Endothelial cell of umbilical vein (primary cell): ENCODE measurements at regions of chr14 and their contacts with region 1.

Region 1: GRCh38 chr14:23327947-23328744 is 6.9 kb downstream of the PABPN1 start:
- DNase-seq: peak; percentile 70
- H3K4me3 ChIP-seq: no peak overlapping the region
- H3K27ac ChIP-seq: no peak overlapping the region
- H3K4me1 ChIP-seq: peaks cover 4% of the 10 kb centered on the region
- H3K27me3 ChIP-seq: no peaks in the 10 kb centered on the region
- CTCF ChIP-seq: peak; percentile 74 to 81
- POLR2A ChIP-seq: peak; percentile 19

Region 2: DNA sequence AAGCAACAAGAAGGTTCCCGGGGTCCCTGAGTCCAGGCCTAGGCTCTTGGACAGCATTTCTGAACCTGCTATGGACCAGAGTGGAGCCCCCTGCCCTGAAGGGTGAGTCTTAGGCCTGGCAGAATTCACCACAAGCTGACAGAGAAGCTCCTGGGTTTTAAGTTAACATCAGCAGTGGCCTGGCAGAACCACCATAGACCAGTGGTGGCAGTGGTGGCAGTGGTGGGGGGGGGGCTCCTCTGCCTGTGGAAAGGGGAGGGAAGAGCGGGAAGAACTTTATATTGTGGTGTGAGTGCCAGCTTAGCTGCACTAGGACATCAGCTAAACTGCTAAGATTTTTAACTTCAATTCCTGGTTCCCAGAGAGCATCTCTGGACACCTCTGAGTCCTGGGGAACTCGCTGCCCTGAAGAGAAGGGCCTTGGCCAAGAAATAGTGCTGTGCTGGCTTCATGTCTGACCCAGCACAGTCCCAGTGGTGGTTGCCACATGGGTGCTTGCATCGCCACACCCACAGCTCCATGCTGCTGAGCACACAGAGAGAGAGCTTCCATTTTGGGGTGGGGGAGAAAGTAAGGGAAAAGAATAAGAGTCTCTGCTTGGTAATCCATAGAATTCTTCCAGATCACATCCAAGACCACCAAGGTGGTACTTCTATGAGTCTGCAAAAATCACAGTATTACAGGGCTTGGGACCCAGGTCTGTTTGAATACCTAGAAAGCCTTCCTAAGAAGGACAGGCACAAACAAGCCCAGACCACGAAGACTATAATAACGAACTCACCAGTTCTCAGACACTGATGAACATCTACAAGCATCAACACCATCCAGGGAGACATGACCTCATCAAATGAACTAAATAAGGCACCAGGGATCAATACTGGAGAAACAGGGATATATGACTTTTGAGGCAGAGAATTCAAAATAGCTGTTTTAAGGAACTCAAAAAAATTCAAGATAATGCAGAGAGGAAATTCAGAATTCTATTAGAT is 110.8 kb before region 1 on chr14:
- CTCF ChIA-PET with region 1: no interaction called
- POLR2A ChIA-PET with region 1: no interaction called
- dilution Hi-C with region 1: no loop called
- intact Hi-C with region 1: no loop called
- DNase-seq: no peak
- H3K4me3 ChIP-seq: no peak overlapping the region
- H3K27ac ChIP-seq: no peak overlapping the region
- H3K4me1 ChIP-seq: no peaks in the 10 kb centered on the region
- H3K27me3 ChIP-seq: peaks cover 0 to 3% of the 10 kb centered on the region in 2 experiments
- CTCF ChIP-seq: no peak
- POLR2A ChIP-seq: no peak

Region 3: GRCh38 chr14:23379366-23380196 is 51.4 kb after region 1 on chr14:
- CTCF ChIA-PET with region 1: interaction called, 48 read pairs
- POLR2A ChIA-PET with region 1: no interaction called
- dilution Hi-C with region 1: no loop called
- intact Hi-C with region 1: loop called (anchors 1 kb)
- DNase-seq: peak; percentile 34
- H3K4me3 ChIP-seq: no peak overlapping the region
- H3K27ac ChIP-seq: no peak overlapping the region
- H3K4me1 ChIP-seq: no peaks in the 10 kb centered on the region
- H3K27me3 ChIP-seq: no peaks in the 10 kb centered on the region
- CTCF ChIP-seq: peak; percentile 80 to 92
- POLR2A ChIP-seq: no peak

Region 4: DNA sequence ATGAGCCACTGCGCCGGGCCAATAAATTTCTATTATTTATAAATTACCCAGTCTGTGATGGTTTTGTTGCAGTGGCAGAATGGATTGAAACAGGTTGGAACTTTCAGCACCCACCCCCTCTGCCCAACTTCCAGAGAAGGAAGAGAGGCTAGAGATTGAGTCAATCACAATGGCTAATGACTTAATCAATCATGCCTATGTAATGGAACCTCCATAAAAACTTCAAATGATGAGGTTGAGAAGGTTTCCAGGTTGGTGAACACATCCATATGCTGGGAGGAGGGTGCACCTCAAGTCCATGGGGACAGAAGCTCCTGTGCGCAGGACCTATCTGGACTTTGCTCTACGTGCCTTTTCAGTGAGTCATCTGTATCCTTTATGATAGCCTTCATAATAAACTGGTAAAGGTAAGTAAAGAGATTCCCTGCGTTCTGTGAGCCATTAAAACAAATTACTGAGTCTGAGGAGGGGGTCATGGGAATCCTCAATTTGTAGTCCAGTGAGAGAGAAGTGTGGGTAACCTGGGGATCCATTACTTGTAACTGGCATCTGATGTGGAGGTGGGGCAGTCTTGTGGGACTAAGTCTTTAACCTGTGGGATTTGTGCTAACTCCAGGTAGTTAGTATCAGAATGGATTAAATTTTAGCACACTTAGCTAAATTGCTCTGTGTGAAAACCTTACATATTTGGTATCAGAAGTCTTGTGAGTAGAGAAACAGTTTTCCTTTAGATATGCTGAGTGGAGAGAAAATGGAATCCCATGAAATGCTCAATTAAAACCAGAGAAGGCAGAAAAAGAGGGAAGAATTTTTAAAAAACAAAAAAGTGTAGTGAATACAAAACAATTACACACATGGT is 129.7 kb after region 1 on chr14:
- CTCF ChIA-PET with region 1: interaction called, 5 read pairs
- POLR2A ChIA-PET with region 1: no interaction called
- dilution Hi-C with region 1: no loop called
- intact Hi-C with region 1: loop called (anchors 1 kb)
- DNase-seq: no peak
- H3K4me3 ChIP-seq: no peak overlapping the region
- H3K27ac ChIP-seq: no peak overlapping the region
- H3K4me1 ChIP-seq: no peaks in the 10 kb centered on the region
- H3K27me3 ChIP-seq: peaks cover 8 to 12% of the 10 kb centered on the region in 2 experiments
- CTCF ChIP-seq: no peak
- POLR2A ChIP-seq: no peak

Region 5: DNA sequence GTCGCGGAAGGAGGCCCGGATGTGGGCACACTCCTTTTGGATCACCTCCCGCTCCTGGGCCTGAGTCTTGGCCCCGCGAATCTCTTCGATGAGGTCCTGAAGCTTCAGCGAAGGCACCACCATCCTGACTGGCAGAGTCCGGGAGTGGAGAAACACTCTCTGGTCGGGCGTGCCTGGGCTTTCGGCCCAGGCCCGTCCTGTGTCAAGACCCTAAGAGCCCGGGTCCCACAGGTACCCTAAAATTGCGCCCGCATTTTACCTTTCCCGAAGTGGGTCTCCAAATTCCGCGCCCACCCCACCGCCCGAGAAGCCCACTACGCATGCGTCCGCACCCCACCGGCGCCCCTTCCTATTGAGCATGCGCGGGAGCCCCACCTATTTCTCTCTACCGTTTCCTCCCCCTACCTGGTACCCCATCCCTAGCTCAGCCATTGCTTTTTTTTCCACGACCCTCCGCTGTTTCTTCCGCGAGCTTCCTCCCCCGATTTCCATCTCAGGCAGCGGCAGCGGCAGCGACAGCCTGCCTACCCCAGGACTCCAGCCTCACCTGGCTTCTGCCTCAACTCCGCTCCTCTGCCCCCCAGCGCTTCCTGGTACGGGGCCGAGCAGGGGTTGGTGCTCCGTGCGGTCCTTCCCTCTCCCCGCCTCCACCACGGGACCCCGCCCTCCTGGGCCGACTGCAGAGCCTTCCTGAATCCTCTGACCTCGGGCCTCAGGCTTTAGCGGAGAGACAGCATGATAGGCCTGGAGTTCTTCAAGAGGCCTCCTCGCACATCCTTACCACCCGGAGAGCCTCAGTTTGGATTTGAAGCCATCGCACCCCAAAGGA is 239.3 kb after region 1 on chr14 and contains the start of gene AP1G2:
- CTCF ChIA-PET with region 1: interaction called, 3 read pairs
- POLR2A ChIA-PET with region 1: no interaction called
- dilution Hi-C with region 1: no loop called
- intact Hi-C with region 1: loop called (anchors 1 kb)
- DNase-seq: peak; percentile 49
- H3K4me3 ChIP-seq: peak within 1 kb of the TSS; percentile 49 to 65 (median 60)
- H3K27ac ChIP-seq: no peak within 1 kb of the TSS
- H3K4me1 ChIP-seq: peaks cover 4% of the 10 kb centered on the region
- H3K27me3 ChIP-seq: peaks cover 2 to 3% of the 10 kb centered on the region in 2 experiments
- CTCF ChIP-seq: no peak
- POLR2A ChIP-seq: peak; percentile 75
- total RNA-seq, gene AP1G2: 30.5 and 39.0 TPM in 2 replicates